Activated CD8-positive, alpha-beta T cell treated with anti-CD3 and anti-CD28 coated beads for 36 hours (primary cell): ENCODE measurements at regions of chr3 and their contacts with region 1.

Region 1: DNA sequence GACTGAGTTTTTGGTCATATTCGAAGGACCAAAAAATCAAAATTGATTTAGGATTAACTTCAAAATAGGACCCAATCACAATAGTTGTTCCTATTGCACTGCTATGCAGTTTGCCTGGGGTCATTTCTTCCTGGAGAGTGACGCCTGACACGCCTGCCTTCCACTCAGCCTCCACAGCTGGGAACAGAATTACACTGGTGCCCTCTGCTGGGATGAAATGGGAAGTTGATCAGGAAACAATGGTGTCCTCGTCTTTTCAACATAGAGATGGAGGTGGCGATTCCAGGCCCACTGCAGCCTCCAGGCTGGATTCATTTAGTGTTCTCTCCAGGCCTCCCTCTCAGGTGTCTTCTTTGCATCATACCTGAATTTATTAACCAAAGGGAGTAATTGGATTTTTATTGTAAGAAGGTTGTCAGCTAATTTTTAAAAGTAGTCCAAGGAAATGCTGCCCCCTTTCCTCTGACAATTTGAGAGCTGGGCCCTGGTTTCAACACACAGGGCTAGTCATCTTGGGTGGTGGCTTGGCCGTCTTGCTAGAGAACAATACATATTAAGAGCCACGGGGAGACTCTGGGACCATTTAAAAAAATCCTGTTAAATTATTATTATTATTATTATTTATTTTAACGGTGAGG is 69.7 kb downstream of the GAP43 start:
- DNase-seq: peak; percentile 80
- ATAC-seq: peak; percentile 95
- H3K4me3 Mint-ChIP-seq: no peak overlapping the region
- H3K27ac Mint-ChIP-seq: no peak overlapping the region
- H3K4me1 Mint-ChIP-seq: no peaks in the 10 kb centered on the region
- H3K27me3 Mint-ChIP-seq: peaks cover 3% of the 10 kb centered on the region
- CTCF ChIP-seq: peak; percentile 85

Region 2: GRCh38 chr3:115085197-115085865 is 607.7 kb before region 1 on chr3:
- CTCF ChIA-PET with region 1: no interaction called
- POLR2A ChIA-PET with region 1: no interaction called
- intact Hi-C with region 1: loop called (anchors 10 kb)
- DNase-seq: no peak
- ATAC-seq: no peak
- H3K4me3 Mint-ChIP-seq: no peak overlapping the region
- H3K27ac Mint-ChIP-seq: no peak overlapping the region
- H3K4me1 Mint-ChIP-seq: peaks cover 40% of the 10 kb centered on the region
- H3K27me3 Mint-ChIP-seq: no peaks in the 10 kb centered on the region
- CTCF ChIP-seq: peak; percentile 16

Region 3: DNA sequence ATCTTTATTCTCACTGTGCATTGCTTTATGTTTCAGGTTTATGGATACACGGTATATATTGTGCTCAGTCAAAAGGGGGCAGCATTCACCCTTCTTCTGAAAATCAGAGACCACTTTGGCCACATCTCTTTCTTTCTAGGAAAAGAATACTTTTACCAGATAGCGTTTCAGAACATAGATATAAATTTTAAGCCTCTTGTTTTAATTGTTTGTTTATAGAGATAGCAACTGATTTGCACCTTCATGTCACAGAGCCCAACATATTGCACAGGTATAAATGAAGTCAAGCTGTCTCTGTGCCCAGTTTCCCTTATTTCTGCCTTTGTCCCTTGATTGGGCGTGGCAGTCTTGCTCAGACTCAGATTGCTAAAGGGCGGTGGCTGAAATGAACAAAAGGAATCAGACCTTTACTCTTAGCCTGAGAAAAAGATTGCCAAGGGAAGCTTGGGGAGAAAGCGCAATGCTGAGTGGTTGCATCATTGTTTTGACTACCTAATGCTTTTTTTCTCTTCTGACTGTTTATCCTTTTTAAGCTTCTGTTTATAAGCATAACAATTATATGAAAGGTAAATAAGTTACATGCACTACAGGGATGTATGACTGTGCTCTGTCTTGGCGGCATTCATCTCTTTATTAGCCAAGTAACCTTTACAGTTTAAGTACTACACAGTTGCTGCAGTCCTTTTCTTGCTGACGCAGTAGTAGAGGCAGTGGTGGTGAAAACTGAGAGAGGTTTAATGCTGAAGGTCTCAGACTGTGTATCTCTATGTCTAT is 475.1 kb before region 1 on chr3:
- CTCF ChIA-PET with region 1: interaction called, 27 read pairs
- POLR2A ChIA-PET with region 1: no interaction called
- intact Hi-C with region 1: loop called (anchors 2 kb)
- DNase-seq: peak; percentile 18
- ATAC-seq: no peak
- H3K4me3 Mint-ChIP-seq: no peak overlapping the region
- H3K27ac Mint-ChIP-seq: no peak overlapping the region
- H3K4me1 Mint-ChIP-seq: no peaks in the 10 kb centered on the region
- H3K27me3 Mint-ChIP-seq: no peaks in the 10 kb centered on the region
- CTCF ChIP-seq: peak; percentile 63